Endothelial cell of umbilical vein (primary cell): ENCODE measurements at regions of chr6 and their contacts with region 1.

Region 1: GRCh38 chr6:166598441-166599138 is 12.1 kb upstream of the RAMACL start:
- DNase-seq: peak; percentile 98
- H3K4me3 ChIP-seq: peak overlapping the region in 1 of 3 experiments; percentile 12
- H3K27ac ChIP-seq: peak overlapping the region; percentile 98
- H3K4me1 ChIP-seq: peaks cover 42% of the 10 kb centered on the region
- H3K27me3 ChIP-seq: no peaks in the 10 kb centered on the region
- CTCF ChIP-seq: no peak
- POLR2A ChIP-seq: peak; percentile 89

Region 2: DNA sequence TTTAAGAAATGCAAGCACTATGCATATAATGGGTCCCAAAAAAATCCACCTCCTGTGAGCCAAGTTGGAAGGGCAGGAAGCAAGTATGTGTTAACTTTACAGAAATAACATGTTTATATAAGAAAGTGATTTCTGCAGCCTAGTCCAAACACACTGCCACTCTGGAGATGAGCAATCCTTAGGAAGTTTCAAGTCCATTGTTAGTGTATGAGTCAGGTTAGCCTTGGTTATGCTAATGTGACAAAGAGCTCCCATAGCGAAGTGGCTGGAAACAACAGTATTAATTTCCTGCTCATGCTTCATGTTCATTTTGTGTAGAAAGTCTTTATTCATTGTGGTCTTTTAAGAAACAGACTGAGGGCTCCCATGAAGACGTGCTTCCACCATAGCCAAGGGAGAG is 552.4 kb before region 1 on chr6:
- CTCF ChIA-PET with region 1: no interaction called
- POLR2A ChIA-PET with region 1: no interaction called
- dilution Hi-C with region 1: no loop called
- intact Hi-C with region 1: no loop called
- DNase-seq: peak; percentile 21
- H3K4me3 ChIP-seq: no peak overlapping the region
- H3K27ac ChIP-seq: no peak overlapping the region
- H3K4me1 ChIP-seq: no peaks in the 10 kb centered on the region
- H3K27me3 ChIP-seq: no peaks in the 10 kb centered on the region
- CTCF ChIP-seq: no peak
- POLR2A ChIP-seq: no peak

Region 3: GRCh38 chr6:166515072-166515810 is 83.3 kb before region 1 on chr6:
- CTCF ChIA-PET with region 1: no interaction called
- POLR2A ChIA-PET with region 1: no interaction called
- dilution Hi-C with region 1: no loop called
- intact Hi-C with region 1: loop called (anchors 2 kb)
- DNase-seq: peak; percentile 56
- H3K4me3 ChIP-seq: no peak overlapping the region
- H3K27ac ChIP-seq: no peak overlapping the region
- H3K4me1 ChIP-seq: peaks cover 6% of the 10 kb centered on the region
- H3K27me3 ChIP-seq: no peaks in the 10 kb centered on the region
- CTCF ChIP-seq: peak; percentile 23 to 32
- POLR2A ChIP-seq: no peak

Region 4: GRCh38 chr6:166586424-166587156 is 12.0 kb before region 1 on chr6 and contains the start of gene RAMACL:
- CTCF ChIA-PET with region 1: interaction called, 6 read pairs
- POLR2A ChIA-PET with region 1: interaction called, 10 read pairs
- dilution Hi-C with region 1: no loop called
- intact Hi-C with region 1: loop called (anchors 1 kb)
- DNase-seq: no peak
- H3K4me3 ChIP-seq: no peak within 1 kb of the TSS
- H3K27ac ChIP-seq: no peak within 1 kb of the TSS
- H3K4me1 ChIP-seq: peaks cover 34% of the 10 kb centered on the region
- H3K27me3 ChIP-seq: no peaks in the 10 kb centered on the region
- CTCF ChIP-seq: no peak
- POLR2A ChIP-seq: no peak
- total RNA-seq, gene RAMACL: 4.0 and 5.3 TPM in 2 replicates

Region 5: GRCh38 chr6:166640342-166641043 is 41.9 kb after region 1 on chr6:
- CTCF ChIA-PET with region 1: interaction called, 4 read pairs
- POLR2A ChIA-PET with region 1: no interaction called
- dilution Hi-C with region 1: no loop called
- intact Hi-C with region 1: loop called (anchors 1 kb)
- DNase-seq: peak; percentile 76
- H3K4me3 ChIP-seq: peak overlapping the region in 1 of 3 experiments; percentile 21
- H3K27ac ChIP-seq: peak overlapping the region; percentile 59
- H3K4me1 ChIP-seq: peaks cover 34% of the 10 kb centered on the region
- H3K27me3 ChIP-seq: no peaks in the 10 kb centered on the region
- CTCF ChIP-seq: peak in 1 of 2 donors; percentile 13
- POLR2A ChIP-seq: no peak

Region 6: GRCh38 chr6:166656230-166657149 is 57.9 kb after region 1 on chr6:
- CTCF ChIA-PET with region 1: no interaction called
- POLR2A ChIA-PET with region 1: no interaction called
- dilution Hi-C with region 1: no loop called
- intact Hi-C with region 1: no loop called
- DNase-seq: no peak
- H3K4me3 ChIP-seq: no peak overlapping the region
- H3K27ac ChIP-seq: no peak overlapping the region
- H3K4me1 ChIP-seq: no peaks in the 10 kb centered on the region
- H3K27me3 ChIP-seq: peaks cover 1 to 7% of the 10 kb centered on the region in 2 experiments
- CTCF ChIP-seq: no peak
- POLR2A ChIP-seq: no peak

Region 7: GRCh38 chr6:166736634-166737033 is 138.0 kb after region 1 on chr6:
- CTCF ChIA-PET with region 1: no interaction called
- POLR2A ChIA-PET with region 1: no interaction called
- dilution Hi-C with region 1: no loop called
- intact Hi-C with region 1: loop called (anchors 1 kb)
- DNase-seq: peak; percentile 89
- H3K4me3 ChIP-seq: no peak overlapping the region
- H3K27ac ChIP-seq: peak overlapping the region; percentile 66
- H3K4me1 ChIP-seq: peaks cover 10% of the 10 kb centered on the region
- H3K27me3 ChIP-seq: no peaks in the 10 kb centered on the region
- CTCF ChIP-seq: no peak
- POLR2A ChIP-seq: no peak